ENCODE measurements at regions of chr15 and their contacts with region 1.

Region 1: DNA sequence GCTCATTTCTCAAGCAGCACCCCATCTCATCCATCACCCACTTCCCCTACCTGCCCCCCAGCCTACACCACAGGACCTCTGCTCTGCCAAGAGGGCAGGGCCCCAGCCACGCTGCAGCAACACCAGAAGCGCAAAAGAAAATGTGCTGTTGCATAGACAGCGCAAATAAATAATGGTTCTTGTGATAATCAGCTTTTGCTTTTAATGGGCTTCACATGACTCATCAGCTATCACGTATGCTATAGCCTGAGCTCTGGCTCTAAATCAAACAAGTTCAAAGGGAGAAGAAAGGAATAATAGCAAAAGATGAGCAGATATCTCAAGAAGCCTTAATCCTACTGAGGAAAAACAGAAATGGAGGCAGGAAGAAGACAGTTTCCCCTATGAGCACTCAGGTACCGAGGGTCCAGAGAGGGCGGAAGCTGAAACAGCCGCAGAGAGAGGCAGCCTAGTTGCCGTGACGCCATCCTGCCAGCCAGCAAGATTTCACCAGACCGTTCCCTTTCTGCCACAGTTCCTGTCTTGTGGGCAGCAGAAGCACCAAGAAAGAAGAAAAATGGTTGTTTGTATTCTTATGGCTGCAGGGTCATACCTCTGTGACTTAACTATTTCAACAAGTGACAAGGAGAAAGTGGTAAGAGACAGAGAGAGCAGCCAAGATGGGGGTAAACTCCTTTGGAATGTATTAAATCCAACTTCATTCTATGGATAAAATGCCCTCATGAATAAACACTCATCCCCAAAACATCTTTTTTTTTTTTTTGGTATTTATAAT is 22.0 kb downstream of the RAB27A start:
- DNase-seq: peak; percentile 79 to 94 (median 92)
- H3K4me3 ChIP-seq: peak overlapping the region in 6 of 7 experiments; percentile 30 to 60 (median 54)
- H3K27ac ChIP-seq: peak overlapping the region; percentile 76 to 85
- H3K4me1 ChIP-seq: peaks cover 15 to 51% (median 26%) of the 10 kb centered on the region in 4 experiments
- H3K27me3 ChIP-seq: no peaks in the 10 kb centered on the region

Region 2: GRCh38 chr15:55250392-55250791 is 17.2 kb before region 1 on chr15:
- CTCF ChIA-PET with region 1: interaction called, 10 read pairs
- POLR2A ChIA-PET with region 1: interaction called, 5 read pairs
- DNase-seq: peak; percentile 52 to 91 (median 88)
- H3K4me3 ChIP-seq: no peak overlapping the region
- H3K27ac ChIP-seq: peak overlapping the region in 1 of 2 experiments; percentile 7
- H3K4me1 ChIP-seq: peaks cover 26 to 77% (median 39%) of the 10 kb centered on the region in 4 experiments
- H3K27me3 ChIP-seq: no peaks in the 10 kb centered on the region

Region 3: GRCh38 chr15:55282284-55282833 is 14.8 kb after region 1 on chr15:
- CTCF ChIA-PET with region 1: interaction called, 10 read pairs
- POLR2A ChIA-PET with region 1: interaction called, 3 read pairs
- DNase-seq: peak; percentile 70 to 90 (median 87)
- H3K4me3 ChIP-seq: peak overlapping the region in 3 of 7 experiments; percentile 16 to 61 (median 52)
- H3K27ac ChIP-seq: peak overlapping the region in 1 of 2 experiments; percentile 18
- H3K4me1 ChIP-seq: peaks cover 40 to 80% (median 45%) of the 10 kb centered on the region in 4 experiments
- H3K27me3 ChIP-seq: no peaks in the 10 kb centered on the region